K562 (cell line): ENCODE measurements at regions of chr10 and their contacts with region 1.

Region 1: GRCh38 chr10:100046021-100046486 is 35.6 kb downstream of the CPN1 start:
- DNase-seq: peak; percentile 55 to 77 (median 68)
- ATAC-seq: peak; percentile 96
- H3K4me3 ChIP-seq: no peak overlapping the region
- H3K27ac ChIP-seq: no peak overlapping the region
- H3K4me1 ChIP-seq: no peaks in the 10 kb centered on the region
- H3K27me3 ChIP-seq: peaks cover 0 to 6% of the 10 kb centered on the region in 2 experiments; a peak in 2 of 5 replicates
- CTCF ChIP-seq: peak; percentile 77 to 80 (median 79)
- EP300 ChIP-seq: no peak
- POLR2A ChIP-seq: no peak
- RAD21 ChIP-seq: peak; percentile 77 to 85

Region 2: DNA sequence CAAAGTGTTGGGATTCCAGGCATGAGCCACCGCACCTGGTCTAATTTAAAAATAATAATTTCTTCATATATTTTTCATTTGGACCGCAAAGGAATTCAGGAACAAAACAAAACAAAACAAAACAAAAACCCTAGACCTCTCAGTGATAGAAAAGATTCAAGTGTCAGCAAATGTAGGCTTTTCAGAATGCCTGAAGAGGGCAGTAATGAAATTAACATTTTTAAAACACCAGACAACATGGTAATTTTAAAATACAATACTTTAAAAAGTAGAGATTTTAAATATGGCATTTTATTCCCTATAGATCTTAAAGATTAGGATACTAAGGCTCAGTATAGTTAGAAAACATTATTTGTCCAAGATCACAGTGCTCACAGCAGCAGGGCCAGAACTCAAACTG is 72.9 kb before region 1 on chr10:
- CTCF ChIA-PET with region 1: interaction called, 7 read pairs
- POLR2A ChIA-PET with region 1: no interaction called
- in situ Hi-C with region 1: no loop called
- intact Hi-C with region 1: loop called (anchors 2 kb)
- DNase-seq: no peak
- ATAC-seq: no peak
- H3K4me3 ChIP-seq: no peak overlapping the region
- H3K27ac ChIP-seq: no peak overlapping the region
- H3K4me1 ChIP-seq: no peaks in the 10 kb centered on the region; a peak in 1 of 5 replicates
- H3K27me3 ChIP-seq: no peaks in the 10 kb centered on the region
- CTCF ChIP-seq: peak in 1 of 3 experiments; percentile 36; a peak in 2 of 6 replicates
- EP300 ChIP-seq: no peak
- POLR2A ChIP-seq: no peak
- RAD21 ChIP-seq: peak in 1 of 2 experiments; percentile 26; a peak in 2 of 4 replicates